PC-9 (cell line): ENCODE measurements at regions of chr22 and their contacts with region 1.

Region 1: GRCh38 chr22:30253205-30253852 is 6.8 kb upstream of the LIF start:
- DNase-seq: peak; percentile 73 to 89
- H3K4me3 ChIP-seq: peak overlapping the region; percentile 90; the same call in 1 of the 2 replicates
- H3K27ac ChIP-seq: peak overlapping the region; percentile 100
- H3K4me1 ChIP-seq: peaks cover 75% of the 10 kb centered on the region
- H3K27me3 ChIP-seq: no peaks in the 10 kb centered on the region
- CTCF ChIP-seq: no peak

Region 2: DNA sequence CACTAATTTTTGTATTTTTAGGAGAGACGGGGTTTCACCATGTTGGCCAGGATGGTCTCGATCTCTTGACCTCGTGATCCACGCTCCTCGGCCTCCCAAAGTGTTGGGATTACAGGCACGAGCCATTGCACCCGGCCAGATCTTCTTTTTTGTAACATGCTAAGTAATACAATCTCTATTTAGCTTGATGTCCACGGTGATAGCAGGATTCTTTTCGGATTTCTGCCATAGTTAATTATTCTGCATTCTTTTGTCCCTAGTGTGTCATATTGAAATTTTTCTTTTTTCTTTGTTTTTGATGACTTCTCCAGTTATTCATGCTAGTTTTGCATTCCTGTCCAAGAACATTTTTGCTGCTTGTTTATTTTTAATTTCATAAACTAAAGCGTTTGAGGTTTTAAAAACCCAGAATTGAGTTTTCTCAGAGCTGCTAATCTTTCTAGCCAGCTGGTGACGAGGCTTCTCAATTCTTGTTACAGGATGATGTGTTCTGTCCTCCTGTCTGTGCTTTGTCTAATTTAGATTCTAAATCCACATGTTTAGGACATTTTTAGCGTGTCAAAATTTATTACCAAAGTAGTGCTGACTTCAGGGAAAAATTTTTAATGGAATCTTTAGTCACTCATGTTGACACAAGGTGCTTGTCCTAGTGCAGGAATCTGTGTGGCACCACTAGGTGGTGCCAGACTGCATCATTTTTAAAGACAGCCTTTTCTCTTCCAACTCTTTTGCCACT is 628.1 kb before region 1 on chr22:
- CTCF ChIA-PET with region 1: no interaction called
- POLR2A ChIA-PET with region 1: no interaction called
- intact Hi-C with region 1: loop called (anchors 5 kb)
- DNase-seq: peak; percentile 37 to 75
- H3K4me3 ChIP-seq: no peak overlapping the region
- H3K27ac ChIP-seq: peak overlapping the region; percentile 87
- H3K4me1 ChIP-seq: peaks cover 75% of the 10 kb centered on the region
- H3K27me3 ChIP-seq: no peaks in the 10 kb centered on the region
- CTCF ChIP-seq: peak; percentile 87

Region 3: GRCh38 chr22:29647954-29648737 is 605.2 kb before region 1 on chr22:
- CTCF ChIA-PET with region 1: no interaction called
- POLR2A ChIA-PET with region 1: no interaction called
- intact Hi-C with region 1: no loop called
- DNase-seq: no peak
- H3K4me3 ChIP-seq: no peak overlapping the region
- H3K27ac ChIP-seq: no peak overlapping the region
- H3K4me1 ChIP-seq: no peaks in the 10 kb centered on the region
- H3K27me3 ChIP-seq: no peaks in the 10 kb centered on the region
- CTCF ChIP-seq: no peak

Region 4: DNA sequence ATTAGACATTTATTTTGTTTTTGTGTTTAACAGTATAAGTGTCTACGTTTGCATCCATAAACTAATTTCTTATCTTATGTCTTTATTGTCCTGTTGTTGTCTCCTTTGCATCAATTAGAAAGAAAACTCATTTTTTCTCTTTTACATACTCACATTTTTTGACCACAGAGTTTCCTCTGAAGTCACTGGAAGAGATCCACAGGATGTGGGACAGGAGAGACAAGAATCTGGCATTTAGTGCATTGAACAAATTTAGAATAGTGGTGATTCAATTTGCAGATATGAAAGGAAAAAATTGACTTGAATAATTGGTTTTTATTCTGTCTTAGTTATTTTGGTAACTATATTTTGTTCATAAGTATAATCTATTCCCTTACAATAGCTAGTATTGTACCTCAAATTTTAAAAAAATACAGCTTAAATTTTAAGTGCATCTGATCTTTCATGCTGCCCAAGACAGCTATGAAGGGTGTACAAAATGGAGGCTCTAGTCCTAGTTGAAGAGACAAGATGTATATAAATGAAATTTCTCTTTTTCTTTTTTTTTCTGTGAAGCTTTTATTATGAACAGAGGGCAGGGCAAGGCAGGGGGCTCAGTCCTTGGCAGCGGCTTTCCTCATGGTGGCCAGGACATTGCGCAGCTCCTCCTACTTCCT is 148.7 kb before region 1 on chr22:
- CTCF ChIA-PET with region 1: no interaction called
- POLR2A ChIA-PET with region 1: interaction called, 3 read pairs
- intact Hi-C with region 1: loop called (anchors 1 kb)
- DNase-seq: no peak
- H3K4me3 ChIP-seq: no peak overlapping the region
- H3K27ac ChIP-seq: no peak overlapping the region
- H3K4me1 ChIP-seq: no peaks in the 10 kb centered on the region; the same call in none of the 2 replicates
- H3K27me3 ChIP-seq: no peaks in the 10 kb centered on the region
- CTCF ChIP-seq: no peak

Region 5: DNA sequence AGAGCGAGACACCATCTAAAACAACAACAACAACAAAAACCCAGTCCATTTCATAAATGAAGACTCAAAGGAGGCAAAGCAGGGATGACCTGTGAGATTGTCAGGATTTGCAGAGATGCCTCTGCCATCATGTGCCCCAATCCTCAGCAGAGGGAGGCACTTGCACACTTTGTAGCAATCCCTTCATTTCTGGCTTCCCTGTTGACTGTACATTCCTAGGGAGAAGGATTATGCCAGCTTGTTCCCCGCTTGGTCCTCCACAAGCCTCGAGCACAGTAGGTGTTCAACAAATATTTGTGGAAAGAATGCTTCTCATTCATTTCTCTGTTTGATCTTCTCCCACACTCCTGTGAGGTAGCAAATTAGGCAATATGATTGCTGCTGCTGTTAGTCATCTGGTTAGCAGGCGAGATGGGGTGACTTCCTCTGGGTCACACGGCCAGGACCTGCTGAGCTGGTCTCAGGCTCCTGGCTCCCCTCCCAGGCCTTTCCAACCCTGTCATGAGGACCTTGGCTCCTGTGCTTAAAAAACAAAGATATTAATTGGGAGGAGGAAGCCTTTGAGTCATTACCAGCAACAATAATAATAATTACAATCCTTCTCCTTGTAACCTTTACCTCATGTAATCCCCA is 40.9 kb before region 1 on chr22:
- CTCF ChIA-PET with region 1: interaction called, 8 read pairs
- POLR2A ChIA-PET with region 1: interaction called, 39 read pairs
- intact Hi-C with region 1: loop called (anchors 1 kb)
- DNase-seq: peak; percentile 89 to 100
- H3K4me3 ChIP-seq: no peak overlapping the region
- H3K27ac ChIP-seq: peak overlapping the region; percentile 98
- H3K4me1 ChIP-seq: peaks cover 86% of the 10 kb centered on the region
- H3K27me3 ChIP-seq: no peaks in the 10 kb centered on the region
- CTCF ChIP-seq: no peak; the same call in 1 of the 2 replicates

Region 6: GRCh38 chr22:30235687-30236170 is 17.6 kb before region 1 on chr22:
- CTCF ChIA-PET with region 1: no interaction called
- POLR2A ChIA-PET with region 1: interaction called, 20 read pairs
- intact Hi-C with region 1: loop called (anchors 1 kb)
- DNase-seq: peak; percentile 91 to 98
- H3K4me3 ChIP-seq: no peak overlapping the region; the same call in 1 of the 2 replicates
- H3K27ac ChIP-seq: peak overlapping the region; percentile 95
- H3K4me1 ChIP-seq: peaks cover 73% of the 10 kb centered on the region
- H3K27me3 ChIP-seq: no peaks in the 10 kb centered on the region
- CTCF ChIP-seq: no peak

Region 7: DNA sequence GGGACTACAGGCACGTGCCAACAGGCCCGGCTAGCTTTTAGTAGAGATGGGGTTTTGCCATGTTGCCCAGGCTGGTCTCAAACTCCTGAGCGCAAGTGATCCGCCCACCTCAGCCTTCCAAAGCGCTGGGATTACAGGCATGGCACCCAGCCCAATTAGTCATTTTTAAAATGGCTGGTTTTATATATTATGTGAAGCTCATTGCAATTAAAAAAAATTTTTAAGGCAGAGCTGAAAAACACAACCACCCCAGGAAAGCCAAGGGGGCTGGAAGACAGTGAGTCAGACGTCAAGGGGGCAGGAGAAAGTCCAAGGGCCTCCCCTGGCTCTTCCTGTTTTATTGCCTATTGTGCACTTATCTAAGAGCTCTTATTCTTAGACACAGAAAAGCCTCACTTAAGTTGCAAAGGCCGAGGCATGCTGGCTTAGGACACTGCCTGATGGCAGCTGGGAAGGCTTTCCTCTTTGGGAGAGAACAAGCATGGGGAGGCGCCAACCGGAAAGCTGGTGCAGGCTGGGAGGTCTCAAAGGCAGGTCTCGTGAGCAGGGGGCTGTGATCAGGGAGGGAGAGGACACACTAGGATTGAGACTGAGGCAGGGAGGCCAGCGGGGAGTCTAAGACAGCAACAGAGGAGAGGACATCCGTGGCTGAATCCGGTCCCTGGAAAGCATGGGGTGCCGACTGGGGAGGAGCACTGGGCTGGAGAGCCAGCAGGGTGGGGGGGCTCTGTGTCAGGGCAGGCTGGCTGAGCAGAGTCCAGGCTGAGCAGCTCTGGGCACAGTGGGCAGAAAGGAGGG is 24.4 kb after region 1 on chr22:
- CTCF ChIA-PET with region 1: no interaction called
- POLR2A ChIA-PET with region 1: no interaction called
- intact Hi-C with region 1: no loop called
- DNase-seq: peak in 1 of 2 experiments; percentile 54
- H3K4me3 ChIP-seq: no peak overlapping the region
- H3K27ac ChIP-seq: no peak overlapping the region
- H3K4me1 ChIP-seq: no peaks in the 10 kb centered on the region
- H3K27me3 ChIP-seq: no peaks in the 10 kb centered on the region
- CTCF ChIP-seq: no peak

Region 8: GRCh38 chr22:30340911-30341685 is 87.8 kb after region 1 on chr22:
- CTCF ChIA-PET with region 1: no interaction called
- POLR2A ChIA-PET with region 1: no interaction called
- intact Hi-C with region 1: no loop called
- DNase-seq: no peak
- H3K4me3 ChIP-seq: no peak overlapping the region
- H3K27ac ChIP-seq: no peak overlapping the region
- H3K4me1 ChIP-seq: no peaks in the 10 kb centered on the region
- H3K27me3 ChIP-seq: no peaks in the 10 kb centered on the region
- CTCF ChIP-seq: no peak

Region 9: GRCh38 chr22:30386960-30387827 is 133.9 kb after region 1 on chr22 and contains the start of gene RNF215:
- CTCF ChIA-PET with region 1: interaction called, 7 read pairs
- POLR2A ChIA-PET with region 1: no interaction called
- intact Hi-C with region 1: loop called (anchors 1 kb)
- DNase-seq: peak; percentile 52 to 89
- H3K4me3 ChIP-seq: peak within 1 kb of the TSS; percentile 65
- H3K27ac ChIP-seq: no peak within 1 kb of the TSS
- H3K4me1 ChIP-seq: peaks cover 15% of the 10 kb centered on the region
- H3K27me3 ChIP-seq: no peaks in the 10 kb centered on the region
- CTCF ChIP-seq: peak; percentile 94
- total RNA-seq, gene RNF215: 24.0 and 33.8 TPM in 2 replicates